Calu3 (cell line): ENCODE measurements at regions of chr3 and their contacts with region 1.

Region 1: GRCh38 chr3:45199837-45200648 is 26.0 kb downstream of the TMEM158 start:
- DNase-seq: peak; percentile 62
- H3K4me3 Mint-ChIP-seq: peak overlapping the region; percentile 12
- H3K27ac Mint-ChIP-seq: peak overlapping the region; percentile 43
- H3K4me1 Mint-ChIP-seq: peaks cover 23% of the 10 kb centered on the region
- H3K27me3 Mint-ChIP-seq: peaks cover 18% of the 10 kb centered on the region
- CTCF ChIP-seq: no peak

Region 2: GRCh38 chr3:45137656-45138181 is 62.3 kb before region 1 on chr3:
- CTCF ChIA-PET with region 1: interaction called, 3 read pairs
- intact Hi-C with region 1: loop called (anchors 5 kb)
- DNase-seq: peak; percentile 38
- H3K4me3 Mint-ChIP-seq: peak overlapping the region; percentile 48
- H3K27ac Mint-ChIP-seq: peak overlapping the region; percentile 87
- H3K4me1 Mint-ChIP-seq: peaks cover 67% of the 10 kb centered on the region
- H3K27me3 Mint-ChIP-seq: no peaks in the 10 kb centered on the region
- CTCF ChIP-seq: no peak